ENCODE measurements at regions of chr12 and their contacts with region 1.

Region 1: GRCh38 chr12:6752921-6753771 is at the start of gene MLF2:
- DNase-seq: peak; percentile 98
- ATAC-seq: peak; percentile 91
- H3K4me3 Mint-ChIP-seq: peak within 1 kb of the TSS; percentile 93
- H3K27ac Mint-ChIP-seq: peak within 1 kb of the TSS; percentile 99
- H3K4me1 Mint-ChIP-seq: peaks cover 16% of the 10 kb centered on the region
- H3K27me3 Mint-ChIP-seq: no peaks in the 10 kb centered on the region
- CTCF ChIP-seq: peak; percentile 76
- total RNA-seq, gene MLF2: 102 and 105 TPM in 2 replicates

Region 2: GRCh38 chr12:6533923-6534694 is 219.0 kb before region 1 on chr12 and contains the start of gene GAPDH:
- CTCF ChIA-PET with region 1: no interaction called
- POLR2A ChIA-PET with region 1: interaction called, 16 read pairs
- intact Hi-C with region 1: no loop called
- DNase-seq: peak; percentile 75
- ATAC-seq: peak; percentile 70
- H3K4me3 Mint-ChIP-seq: peak within 1 kb of the TSS; percentile 94
- H3K27ac Mint-ChIP-seq: peak within 1 kb of the TSS; percentile 93
- H3K4me1 Mint-ChIP-seq: peaks cover 47% of the 10 kb centered on the region
- H3K27me3 Mint-ChIP-seq: no peaks in the 10 kb centered on the region
- CTCF ChIP-seq: no peak
- total RNA-seq, gene GAPDH: 1,003 and 1,033 TPM in 2 replicates

Region 3: GRCh38 chr12:6632026-6632983 is 120.8 kb before region 1 on chr12:
- CTCF ChIA-PET with region 1: no interaction called
- POLR2A ChIA-PET with region 1: interaction called, 15 read pairs
- intact Hi-C with region 1: no loop called
- DNase-seq: peak; percentile 51
- ATAC-seq: peak; percentile 53
- H3K4me3 Mint-ChIP-seq: peak overlapping the region; percentile 86
- H3K27ac Mint-ChIP-seq: peak overlapping the region; percentile 98
- H3K4me1 Mint-ChIP-seq: peaks cover 84% of the 10 kb centered on the region
- H3K27me3 Mint-ChIP-seq: no peaks in the 10 kb centered on the region
- CTCF ChIP-seq: no peak

Region 4: DNA sequence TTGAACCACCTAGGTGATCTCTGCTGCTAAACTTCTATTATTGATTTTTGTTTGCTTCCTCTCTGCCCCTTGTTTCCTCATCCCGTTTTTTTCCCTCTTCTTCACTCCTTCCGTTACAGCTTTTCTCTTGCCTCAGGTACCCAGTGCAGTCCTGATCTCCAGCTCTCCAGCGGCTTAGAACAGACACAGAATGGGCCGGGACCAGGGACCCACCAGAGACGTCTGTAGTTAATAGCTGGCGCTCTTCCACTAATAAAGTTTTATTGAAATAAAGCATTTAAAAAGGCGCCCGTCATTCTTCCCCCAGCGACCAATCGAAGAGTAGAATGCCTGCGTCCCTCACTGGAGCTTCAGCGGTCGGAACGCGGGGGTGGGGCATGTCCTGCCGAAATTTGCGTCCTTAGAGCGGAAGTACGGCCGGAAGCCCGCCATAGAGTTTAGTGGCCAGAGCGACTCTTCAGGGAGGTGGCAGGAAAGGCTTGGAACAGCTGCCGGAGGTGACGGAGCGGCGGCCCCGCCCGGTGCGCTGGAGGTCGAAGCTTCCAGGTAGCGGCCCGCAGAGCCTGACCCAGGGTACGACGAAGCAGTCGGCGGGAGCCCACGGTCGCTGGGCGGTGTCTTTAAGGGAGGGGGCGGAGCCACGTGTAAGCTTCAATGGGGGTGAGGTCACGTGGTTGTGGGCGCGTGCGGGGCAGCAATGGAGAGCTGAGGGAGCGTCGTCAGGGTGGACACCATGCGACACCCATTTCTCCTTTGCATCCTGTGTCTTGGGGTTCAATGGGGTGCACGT is 29.3 kb before region 1 on chr12 and contains the start of gene COPS7A:
- CTCF ChIA-PET with region 1: interaction called, 9 read pairs
- POLR2A ChIA-PET with region 1: interaction called, 94 read pairs
- intact Hi-C with region 1: loop called (anchors 1 kb)
- DNase-seq: peak; percentile 92
- ATAC-seq: peak; percentile 93
- H3K4me3 Mint-ChIP-seq: peak within 1 kb of the TSS; percentile 89
- H3K27ac Mint-ChIP-seq: peak within 1 kb of the TSS; percentile 96
- H3K4me1 Mint-ChIP-seq: peaks cover 19% of the 10 kb centered on the region
- H3K27me3 Mint-ChIP-seq: no peaks in the 10 kb centered on the region
- CTCF ChIP-seq: no peak
- total RNA-seq, gene COPS7A: 28.1 and 35.8 TPM in 2 replicates

Region 5: DNA sequence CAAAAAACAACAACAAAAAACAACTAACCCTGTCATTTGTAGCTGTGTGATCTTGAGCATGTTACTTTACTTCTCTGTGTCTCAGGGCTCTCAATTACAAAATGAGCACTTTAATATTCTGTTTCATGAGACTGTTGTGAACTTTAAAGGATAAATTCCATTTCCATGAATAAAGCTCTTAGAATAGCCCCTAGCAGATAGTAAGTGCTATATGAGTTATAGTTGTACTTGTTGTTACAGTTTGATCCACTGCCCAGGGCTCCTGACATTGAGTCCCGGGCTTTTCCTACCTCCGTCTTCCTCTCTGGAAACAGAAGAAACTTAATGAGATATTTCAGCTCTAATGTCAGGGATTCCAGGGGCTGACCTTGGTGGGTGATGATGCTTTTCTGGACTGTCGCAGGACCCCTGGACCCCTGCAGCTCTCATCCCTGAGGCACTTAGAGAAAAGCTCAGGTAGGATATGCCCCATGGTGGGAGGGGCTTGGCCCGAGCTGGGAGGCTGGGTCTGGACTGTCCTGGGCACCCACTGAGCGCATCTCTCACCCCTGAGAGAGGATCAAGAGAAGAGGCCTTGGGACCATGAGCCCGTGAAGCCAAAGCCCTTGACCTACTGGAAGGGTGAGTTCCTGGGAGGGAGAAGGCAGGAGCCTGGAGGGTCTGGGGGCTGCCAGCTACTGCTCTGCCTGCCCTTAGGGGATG is 80.2 kb after region 1 on chr12:
- CTCF ChIA-PET with region 1: interaction called, 23 read pairs
- POLR2A ChIA-PET with region 1: interaction called, 7 read pairs
- intact Hi-C with region 1: no loop called
- DNase-seq: no peak
- ATAC-seq: no peak
- H3K4me3 Mint-ChIP-seq: no peak overlapping the region
- H3K27ac Mint-ChIP-seq: no peak overlapping the region
- H3K4me1 Mint-ChIP-seq: peaks cover 11% of the 10 kb centered on the region
- H3K27me3 Mint-ChIP-seq: peaks cover 25% of the 10 kb centered on the region
- CTCF ChIP-seq: no peak

Region 6: DNA sequence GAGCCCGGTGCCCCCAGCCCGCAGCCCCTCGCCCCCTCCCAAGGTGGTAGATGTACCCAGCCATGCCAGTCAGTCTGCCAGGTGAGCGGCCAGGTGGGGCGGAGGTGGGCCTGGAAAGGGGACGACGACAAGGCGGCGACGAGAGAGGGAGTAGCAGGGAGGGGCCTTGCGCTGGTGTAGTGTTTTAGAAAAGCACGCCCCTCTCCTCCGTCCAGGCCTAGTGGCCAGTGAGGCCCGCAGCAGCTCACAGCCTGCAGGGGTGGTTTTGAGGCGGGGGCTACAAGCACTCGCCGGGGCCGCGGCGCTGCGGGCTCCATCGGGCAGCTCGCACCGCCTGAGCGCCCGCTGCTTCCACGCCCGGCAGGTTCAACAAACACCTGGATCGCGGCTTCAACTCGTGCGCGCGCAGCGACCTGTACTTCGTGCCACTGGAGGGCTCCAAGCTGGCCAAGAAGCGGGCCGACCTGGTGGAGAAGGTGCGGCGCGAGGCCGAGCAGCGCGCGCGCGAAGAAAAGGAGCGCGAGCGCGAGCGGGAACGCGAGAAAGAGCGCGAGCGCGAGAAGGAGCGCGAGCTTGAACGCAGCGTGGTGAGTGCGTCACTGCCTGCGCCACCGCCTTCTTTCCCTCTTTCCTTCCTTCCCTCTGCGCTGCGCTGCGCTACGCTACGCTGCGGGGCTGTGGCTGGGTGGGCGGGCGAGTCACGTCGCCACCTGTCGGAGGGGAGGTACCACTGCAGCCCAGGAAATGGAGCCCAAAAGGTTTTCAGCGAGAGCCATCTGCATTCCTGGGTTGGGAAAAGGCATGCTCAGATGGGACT is 184.5 kb after region 1 on chr12:
- CTCF ChIA-PET with region 1: no interaction called
- POLR2A ChIA-PET with region 1: interaction called, 13 read pairs
- intact Hi-C with region 1: loop called (anchors 5 kb)
- DNase-seq: peak; percentile 84
- ATAC-seq: peak; percentile 92
- H3K4me3 Mint-ChIP-seq: peak overlapping the region; percentile 84
- H3K27ac Mint-ChIP-seq: peak overlapping the region; percentile 91
- H3K4me1 Mint-ChIP-seq: peaks cover 35% of the 10 kb centered on the region
- H3K27me3 Mint-ChIP-seq: no peaks in the 10 kb centered on the region
- CTCF ChIP-seq: no peak

Region 7: DNA sequence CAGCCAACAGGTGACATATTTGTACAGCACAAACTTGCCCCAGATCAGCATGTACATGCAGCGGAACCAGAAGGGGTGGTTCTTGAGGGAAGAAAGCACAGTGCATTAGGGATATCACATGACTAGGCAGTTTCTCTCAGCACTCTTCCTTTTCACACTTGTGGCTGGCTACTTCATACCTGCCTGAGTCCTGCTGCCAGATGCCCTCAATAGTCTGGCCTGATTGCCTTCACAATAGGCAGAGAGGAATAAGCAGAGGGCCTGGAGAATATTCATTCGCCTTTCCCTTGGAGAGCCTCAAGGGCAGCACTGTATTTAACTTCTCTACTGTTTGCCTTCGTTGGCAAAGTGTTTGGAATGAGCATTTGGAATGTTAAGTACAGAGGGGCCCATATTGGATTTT is 225.5 kb after region 1 on chr12:
- CTCF ChIA-PET with region 1: no interaction called
- POLR2A ChIA-PET with region 1: no interaction called
- intact Hi-C with region 1: no loop called
- DNase-seq: no peak
- ATAC-seq: no peak
- H3K4me3 Mint-ChIP-seq: no peak overlapping the region
- H3K27ac Mint-ChIP-seq: no peak overlapping the region
- H3K4me1 Mint-ChIP-seq: no peaks in the 10 kb centered on the region
- H3K27me3 Mint-ChIP-seq: no peaks in the 10 kb centered on the region
- CTCF ChIP-seq: no peak